PC-9 (cell line): ENCODE measurements at regions of chr3 and their contacts with region 1.

Region 1: GRCh38 chr3:189573004-189573403 is 58.2 kb upstream of the TP63 start:
- DNase-seq: peak; percentile 26 to 39
- H3K4me3 ChIP-seq: no peak overlapping the region
- H3K27ac ChIP-seq: peak overlapping the region; percentile 91
- H3K4me1 ChIP-seq: peaks cover 30% of the 10 kb centered on the region
- H3K27me3 ChIP-seq: no peaks in the 10 kb centered on the region
- CTCF ChIP-seq: no peak

Region 2: DNA sequence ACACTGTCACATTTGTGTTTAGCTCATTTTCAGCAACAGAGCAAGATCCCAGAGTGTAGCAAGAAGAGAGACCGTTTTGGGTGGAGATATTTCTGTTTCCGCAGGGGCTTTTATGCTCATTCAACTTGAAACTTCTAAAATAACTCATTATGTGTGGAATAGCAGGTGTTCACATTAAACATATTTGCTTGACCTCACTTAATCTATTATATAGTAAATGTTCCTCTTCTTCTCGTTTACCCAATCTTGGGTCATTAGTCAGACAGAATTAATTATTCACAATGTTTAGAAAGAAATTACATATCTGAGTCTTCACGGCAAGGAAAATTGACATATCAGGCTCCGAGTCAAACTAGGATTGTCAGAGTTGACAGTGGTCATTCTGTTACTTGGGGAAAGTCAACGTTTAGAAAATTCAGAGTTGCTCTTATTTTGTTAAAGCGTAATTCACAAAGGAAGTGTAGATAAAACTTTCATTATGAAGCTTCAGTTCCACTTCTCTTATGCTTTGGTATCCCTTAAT is 178.3 kb before region 1 on chr3:
- CTCF ChIA-PET with region 1: no interaction called
- POLR2A ChIA-PET with region 1: no interaction called
- intact Hi-C with region 1: loop called (anchors 1 kb)
- DNase-seq: no peak
- H3K4me3 ChIP-seq: no peak overlapping the region
- H3K27ac ChIP-seq: peak overlapping the region; percentile 89
- H3K4me1 ChIP-seq: peaks cover 36% of the 10 kb centered on the region
- H3K27me3 ChIP-seq: no peaks in the 10 kb centered on the region
- CTCF ChIP-seq: no peak

Region 3: GRCh38 chr3:189512039-189512438 is 61.0 kb before region 1 on chr3:
- CTCF ChIA-PET with region 1: no interaction called
- POLR2A ChIA-PET with region 1: no interaction called
- intact Hi-C with region 1: loop called (anchors 2 kb)
- DNase-seq: no peak
- H3K4me3 ChIP-seq: no peak overlapping the region
- H3K27ac ChIP-seq: peak overlapping the region; percentile 61; the same call in 1 of the 2 replicates
- H3K4me1 ChIP-seq: peaks cover 27% of the 10 kb centered on the region
- H3K27me3 ChIP-seq: no peaks in the 10 kb centered on the region
- CTCF ChIP-seq: no peak

Region 4: DNA sequence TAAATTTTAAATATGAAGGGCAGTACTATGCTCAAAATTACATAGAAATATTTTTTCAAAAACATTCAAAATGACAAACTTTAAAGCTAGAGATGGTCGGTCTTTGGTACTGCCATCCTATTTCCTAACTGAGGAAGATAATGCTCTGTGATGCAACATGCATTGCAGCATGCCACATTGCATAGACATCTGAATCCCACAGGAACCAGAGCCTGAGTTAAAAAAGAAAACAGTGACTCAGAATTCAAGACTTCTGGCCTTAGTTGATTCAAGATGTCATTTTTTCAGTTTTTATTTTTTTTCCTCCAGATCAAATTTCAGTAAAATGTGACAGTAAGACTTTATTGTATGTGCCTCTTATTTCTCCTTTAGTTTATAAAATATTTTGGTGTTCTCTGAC is 91.3 kb after region 1 on chr3:
- CTCF ChIA-PET with region 1: interaction called, 16 read pairs
- POLR2A ChIA-PET with region 1: no interaction called
- intact Hi-C with region 1: no loop called
- DNase-seq: peak; percentile 51 to 83
- H3K4me3 ChIP-seq: no peak overlapping the region
- H3K27ac ChIP-seq: peak overlapping the region; percentile 51
- H3K4me1 ChIP-seq: peaks cover 15% of the 10 kb centered on the region
- H3K27me3 ChIP-seq: no peaks in the 10 kb centered on the region
- CTCF ChIP-seq: no peak

Region 5: DNA sequence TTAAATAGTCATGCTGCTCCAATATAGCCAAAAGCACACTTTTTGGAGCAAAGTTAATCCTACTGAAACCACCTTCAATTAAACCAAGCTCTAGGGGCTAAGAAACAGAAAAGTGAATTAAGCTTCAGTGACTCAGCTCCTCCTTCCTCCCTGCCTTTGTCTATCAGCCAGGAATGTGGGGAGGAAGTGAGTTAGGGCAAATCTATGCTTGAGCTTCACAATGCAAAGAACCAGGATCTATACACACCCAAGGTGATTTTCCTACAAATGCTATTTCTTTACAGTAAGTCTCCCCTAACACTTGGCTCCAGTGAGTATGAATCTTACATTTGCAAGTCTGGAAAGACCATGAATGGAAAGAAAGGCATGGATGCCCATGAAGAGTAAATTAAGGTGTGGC is 335.6 kb after region 1 on chr3:
- CTCF ChIA-PET with region 1: no interaction called
- POLR2A ChIA-PET with region 1: interaction called, 11 read pairs
- intact Hi-C with region 1: no loop called
- DNase-seq: peak; percentile 47 to 77
- H3K4me3 ChIP-seq: peak overlapping the region; percentile 7; the same call in 1 of the 2 replicates
- H3K27ac ChIP-seq: peak overlapping the region; percentile 98
- H3K4me1 ChIP-seq: peaks cover 45% of the 10 kb centered on the region
- H3K27me3 ChIP-seq: no peaks in the 10 kb centered on the region
- CTCF ChIP-seq: no peak

Region 6: GRCh38 chr3:189921770-189922169 is 348.8 kb after region 1 on chr3:
- CTCF ChIA-PET with region 1: no interaction called
- POLR2A ChIA-PET with region 1: no interaction called
- intact Hi-C with region 1: no loop called
- DNase-seq: no peak
- H3K4me3 ChIP-seq: no peak overlapping the region
- H3K27ac ChIP-seq: no peak overlapping the region
- H3K4me1 ChIP-seq: no peaks in the 10 kb centered on the region
- H3K27me3 ChIP-seq: no peaks in the 10 kb centered on the region
- CTCF ChIP-seq: no peak